ENCODE measurements at regions of chr13 and their contacts with region 1.

Region 1: GRCh38 chr13:36275190-36276002 is 22.2 kb downstream of the CCDC169 start:
- DNase-seq: peak; percentile 31
- ATAC-seq: no peak
- H3K4me3 Mint-ChIP-seq: no peak overlapping the region
- H3K27ac Mint-ChIP-seq: no peak overlapping the region
- H3K4me1 Mint-ChIP-seq: no peaks in the 10 kb centered on the region
- H3K27me3 Mint-ChIP-seq: no peaks in the 10 kb centered on the region

Region 2: DNA sequence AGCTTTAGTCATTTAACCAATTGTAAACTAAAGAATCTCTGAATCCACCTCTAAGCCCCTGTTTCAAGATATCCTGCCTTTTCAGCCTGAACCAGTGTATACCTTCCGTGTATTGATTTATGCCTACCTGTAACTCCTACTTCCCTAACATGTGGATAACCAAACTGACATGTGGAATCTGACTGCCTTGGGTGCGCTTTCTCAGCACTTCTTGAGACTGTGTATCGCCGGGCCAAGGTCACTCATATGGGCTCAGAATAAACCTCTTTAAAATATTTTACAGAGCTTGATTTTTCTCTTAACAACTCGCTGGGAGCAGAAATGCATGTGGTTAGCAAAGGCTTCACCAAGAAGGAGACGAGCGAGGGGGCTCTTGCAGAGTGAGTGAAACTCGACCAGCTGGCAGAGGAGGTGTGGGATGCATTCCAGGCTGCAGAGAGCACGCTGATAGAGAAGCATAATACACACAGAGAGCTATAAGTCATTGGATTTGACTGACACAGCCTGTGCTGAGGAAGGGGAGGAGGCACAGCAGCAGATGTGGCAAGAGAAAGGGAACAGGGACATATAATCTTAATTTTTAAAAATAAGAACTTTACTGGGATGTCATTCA is 530.7 kb before region 1 on chr13:
- CTCF ChIA-PET with region 1: no interaction called
- POLR2A ChIA-PET with region 1: no interaction called
- intact Hi-C with region 1: no loop called
- DNase-seq: no peak
- ATAC-seq: no peak
- H3K4me3 Mint-ChIP-seq: no peak overlapping the region
- H3K27ac Mint-ChIP-seq: no peak overlapping the region
- H3K4me1 Mint-ChIP-seq: no peaks in the 10 kb centered on the region
- H3K27me3 Mint-ChIP-seq: peaks cover 4% of the 10 kb centered on the region

Region 3: DNA sequence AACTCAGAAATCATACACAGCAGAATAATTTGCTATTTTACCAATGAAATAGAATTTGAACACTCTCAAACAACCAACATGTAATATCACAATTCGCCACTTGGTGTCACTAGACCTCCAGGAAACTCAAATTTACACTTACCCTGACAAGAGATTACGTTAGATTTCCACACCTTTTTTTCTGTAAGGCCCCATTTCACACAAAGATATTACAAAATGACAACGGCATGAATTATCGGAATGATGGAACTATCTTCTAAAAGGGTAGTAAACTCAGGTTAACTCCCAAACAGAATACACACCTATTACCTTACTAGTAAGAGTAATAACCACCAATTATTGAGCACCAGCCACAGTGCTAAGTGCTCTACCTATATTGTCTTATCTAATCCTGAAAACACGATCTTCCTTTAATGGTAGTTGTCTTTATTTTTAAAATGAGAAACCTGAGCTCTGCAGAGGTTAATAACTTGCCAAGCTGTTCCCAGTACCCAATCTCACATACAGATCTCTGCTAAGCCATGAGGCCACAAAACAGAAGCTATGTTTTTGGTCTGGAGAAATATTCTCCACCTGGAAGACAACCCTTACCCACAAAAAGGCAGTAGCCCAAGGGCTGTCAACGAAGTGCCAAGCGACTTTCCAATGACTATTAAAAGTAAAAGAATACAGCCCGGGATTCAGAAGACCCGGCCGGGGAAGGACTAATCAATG is 296.6 kb before region 1 on chr13:
- CTCF ChIA-PET with region 1: interaction called, 51 read pairs
- POLR2A ChIA-PET with region 1: no interaction called
- intact Hi-C with region 1: loop called (anchors 1 kb)
- DNase-seq: peak; percentile 40
- ATAC-seq: no peak
- H3K4me3 Mint-ChIP-seq: no peak overlapping the region
- H3K27ac Mint-ChIP-seq: no peak overlapping the region
- H3K4me1 Mint-ChIP-seq: no peaks in the 10 kb centered on the region
- H3K27me3 Mint-ChIP-seq: peaks cover 5% of the 10 kb centered on the region

Measured in activated CD4-positive, alpha-beta T cell treated with anti-CD3 and anti-CD28 coated beads for 36 hours (primary cell).